ENCODE measurements at regions of chr16 and their contacts with region 1.

Region 1: DNA sequence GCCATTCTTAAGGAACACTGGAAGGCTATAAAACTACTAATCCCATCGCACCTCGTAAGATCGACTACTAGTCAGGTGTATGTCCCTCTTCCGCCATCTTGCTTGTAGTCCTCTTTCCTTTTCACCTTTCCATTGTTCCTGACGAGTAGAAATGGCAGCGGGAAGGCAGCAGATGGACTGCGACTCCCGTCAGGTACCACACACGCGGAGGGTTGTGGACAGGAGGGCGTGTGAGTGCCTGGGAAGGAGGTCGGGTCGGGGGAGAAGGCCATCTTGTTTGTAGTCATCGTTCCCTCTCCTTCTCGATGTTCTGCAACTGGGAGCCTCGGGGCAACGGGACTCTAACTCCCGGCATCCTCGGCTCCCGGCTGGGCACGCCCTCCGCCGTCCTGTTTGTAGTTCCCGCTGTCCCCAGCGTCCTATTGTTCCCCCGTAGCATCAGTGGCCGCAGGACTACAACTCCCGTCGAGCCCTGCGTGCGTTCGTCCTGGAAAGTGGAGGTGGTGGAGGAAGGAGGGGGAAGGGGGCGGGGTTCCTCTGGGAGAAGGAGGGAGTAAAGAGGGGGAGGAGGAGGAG is 324 bp upstream of the FBXL19 start:
- DNase-seq: peak; percentile 98
- H3K4me3 Mint-ChIP-seq: peak overlapping the region; percentile 99
- H3K27ac Mint-ChIP-seq: peak overlapping the region; percentile 100
- H3K4me1 Mint-ChIP-seq: peaks cover 10% of the 10 kb centered on the region
- H3K27me3 Mint-ChIP-seq: no peaks in the 10 kb centered on the region

Region 2: DNA sequence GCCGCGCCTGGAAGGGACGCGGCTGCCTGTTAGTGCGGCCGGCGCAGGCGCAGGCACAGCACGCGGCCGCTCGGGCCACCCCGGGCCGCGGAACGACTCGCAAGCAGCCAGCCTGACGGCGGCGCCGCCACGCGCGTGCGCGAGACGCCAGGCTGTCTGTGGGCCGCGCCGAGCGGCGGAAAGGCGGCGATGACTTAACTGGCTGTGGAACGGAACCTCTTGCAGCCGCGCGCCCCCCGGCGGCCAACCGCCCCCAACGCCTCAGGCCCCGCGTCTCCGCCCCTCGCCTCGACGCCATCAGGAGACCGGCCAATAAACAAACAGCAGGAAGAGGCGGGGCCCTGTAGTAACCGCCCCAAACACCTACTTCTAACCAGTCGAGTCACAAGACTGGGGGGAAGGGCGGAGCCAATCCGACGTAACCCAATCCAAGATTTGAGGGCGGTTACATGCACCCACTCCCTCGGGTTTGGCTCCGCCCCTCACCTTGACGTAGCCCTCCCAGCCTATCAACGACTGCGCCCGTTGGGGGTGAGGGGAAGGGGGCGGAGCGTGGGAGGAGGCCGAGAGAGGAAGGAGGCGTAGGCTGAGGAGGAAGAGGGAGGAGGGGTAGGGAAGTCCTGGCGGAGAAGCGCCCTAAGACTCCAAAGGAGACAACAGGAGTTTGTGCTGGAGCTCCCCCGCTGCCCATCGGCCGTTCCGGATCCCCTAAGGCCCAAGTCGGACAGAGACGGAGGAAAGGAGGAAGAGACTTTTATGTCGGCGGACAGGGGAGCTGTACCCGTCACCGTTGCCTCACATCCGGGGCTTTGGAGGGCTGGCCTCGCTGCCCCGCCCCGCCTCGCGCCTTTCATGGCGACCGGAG is 264.9 kb before region 1 on chr16 and contains the start of gene FBRS:
- CTCF ChIA-PET with region 1: no interaction called
- POLR2A ChIA-PET with region 1: no interaction called
- intact Hi-C with region 1: loop called (anchors 1 kb)
- DNase-seq: peak; percentile 100
- H3K4me3 Mint-ChIP-seq: peak within 1 kb of the TSS; percentile 96
- H3K27ac Mint-ChIP-seq: peak within 1 kb of the TSS; percentile 100
- H3K4me1 Mint-ChIP-seq: peaks cover 38% of the 10 kb centered on the region
- H3K27me3 Mint-ChIP-seq: no peaks in the 10 kb centered on the region
- total RNA-seq, gene FBRS: 91.8 to 95.6 TPM

Region 3: DNA sequence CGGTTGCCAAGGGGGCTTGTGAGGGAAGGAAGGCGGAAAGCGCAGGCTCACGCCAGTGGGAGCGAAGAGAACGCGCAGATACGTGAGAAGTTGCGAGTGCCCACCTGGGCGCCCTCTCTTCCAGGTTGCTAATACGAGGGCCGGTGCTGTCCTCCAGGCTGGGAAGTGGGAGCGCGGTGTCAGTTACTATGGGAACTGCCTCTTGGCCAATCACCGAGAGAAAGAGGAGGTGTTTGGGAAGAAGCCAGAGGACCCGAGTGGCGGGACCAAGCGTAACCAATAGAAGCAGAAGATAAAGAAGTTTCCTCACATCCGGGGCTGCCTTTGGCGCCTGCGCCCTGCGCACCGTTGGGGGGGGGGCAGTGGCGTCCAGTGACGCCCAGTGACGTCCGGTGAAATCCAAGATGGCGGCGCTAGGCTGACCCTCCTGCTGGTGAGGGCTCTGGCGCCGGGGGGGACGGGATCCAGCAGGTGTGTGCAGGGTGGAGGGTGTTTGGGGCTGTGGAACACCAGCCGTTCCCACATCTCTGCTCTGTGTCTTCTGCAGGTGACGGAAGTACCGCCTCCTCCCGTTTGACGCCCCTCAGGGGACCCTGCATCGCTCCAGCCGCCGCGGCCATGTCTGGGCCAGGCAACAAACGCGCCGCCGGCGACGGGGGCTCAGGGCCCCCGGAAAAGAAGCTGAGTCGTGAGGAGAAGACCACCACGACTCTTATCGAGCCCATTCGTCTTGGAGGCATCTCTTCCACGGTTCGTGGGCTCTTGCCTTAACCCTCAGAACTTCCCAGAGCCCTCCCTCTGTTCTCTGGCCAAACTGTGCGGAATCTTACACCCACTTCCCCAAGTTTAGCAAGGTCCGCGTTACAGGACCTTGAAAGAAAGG is 160.9 kb before region 1 on chr16 and contains the starts of genes CFAP119 and RNF40:
- CTCF ChIA-PET with region 1: no interaction called
- POLR2A ChIA-PET with region 1: no interaction called
- intact Hi-C with region 1: loop called (anchors 1 kb)
- DNase-seq: peak; percentile 96
- H3K4me3 Mint-ChIP-seq: peak within 1 kb of the TSS; percentile 93
- H3K27ac Mint-ChIP-seq: peak within 1 kb of the TSS; percentile 81
- H3K4me1 Mint-ChIP-seq: peaks cover 25% of the 10 kb centered on the region
- H3K27me3 Mint-ChIP-seq: no peaks in the 10 kb centered on the region
- total RNA-seq, gene CFAP119: 3.8 to 4.9 TPM
- total RNA-seq, gene RNF40: 70.9 to 72.8 TPM

Region 4: DNA sequence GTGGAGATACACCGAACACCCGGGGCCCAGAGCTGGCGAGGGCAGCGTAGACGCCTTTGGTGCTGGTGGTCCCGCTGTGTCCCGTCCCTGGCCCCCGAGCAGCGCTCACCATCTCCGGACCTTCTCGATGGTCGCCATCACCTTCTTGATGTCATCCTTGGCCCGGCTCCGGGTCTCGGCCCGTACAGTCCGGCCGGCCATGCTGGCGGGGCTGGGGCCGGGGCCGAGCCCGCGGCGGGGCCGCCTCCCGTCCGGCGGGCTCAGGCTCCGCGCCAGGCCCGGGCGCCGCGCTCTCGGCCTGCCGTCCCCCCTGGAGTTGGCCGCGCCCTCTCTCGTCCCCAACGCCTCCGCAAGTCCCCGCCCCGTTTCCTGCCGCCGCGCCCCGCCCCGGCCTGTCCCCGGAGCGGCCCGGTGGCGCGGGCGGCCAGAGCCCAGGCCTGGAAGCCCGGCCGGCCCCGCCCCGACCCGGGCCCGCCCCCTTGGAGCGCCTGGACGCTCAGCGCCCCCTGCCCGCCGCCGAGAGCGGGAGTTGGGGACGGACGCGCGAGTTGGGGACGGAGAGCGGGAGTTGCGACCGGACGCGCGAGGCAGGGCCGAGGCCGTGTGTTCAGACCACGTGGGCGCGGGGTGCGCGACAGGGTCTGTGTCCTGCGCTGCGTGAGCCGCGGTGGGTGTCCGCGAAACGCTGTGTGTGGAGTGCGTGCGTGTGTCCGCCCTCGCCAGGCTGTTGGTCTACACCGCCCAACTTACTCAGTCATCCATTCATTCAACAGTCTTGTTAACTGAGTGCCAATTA is 29.1 kb before region 1 on chr16 and contains the start of gene BCL7C:
- CTCF ChIA-PET with region 1: no interaction called
- POLR2A ChIA-PET with region 1: no interaction called
- intact Hi-C with region 1: loop called (anchors 1 kb)
- DNase-seq: peak; percentile 92
- H3K4me3 Mint-ChIP-seq: peak within 1 kb of the TSS; percentile 85
- H3K27ac Mint-ChIP-seq: peak within 1 kb of the TSS; percentile 74
- H3K4me1 Mint-ChIP-seq: peaks cover 38% of the 10 kb centered on the region
- H3K27me3 Mint-ChIP-seq: no peaks in the 10 kb centered on the region
- total RNA-seq, gene BCL7C: 25.6 to 25.7 TPM

Region 5: DNA sequence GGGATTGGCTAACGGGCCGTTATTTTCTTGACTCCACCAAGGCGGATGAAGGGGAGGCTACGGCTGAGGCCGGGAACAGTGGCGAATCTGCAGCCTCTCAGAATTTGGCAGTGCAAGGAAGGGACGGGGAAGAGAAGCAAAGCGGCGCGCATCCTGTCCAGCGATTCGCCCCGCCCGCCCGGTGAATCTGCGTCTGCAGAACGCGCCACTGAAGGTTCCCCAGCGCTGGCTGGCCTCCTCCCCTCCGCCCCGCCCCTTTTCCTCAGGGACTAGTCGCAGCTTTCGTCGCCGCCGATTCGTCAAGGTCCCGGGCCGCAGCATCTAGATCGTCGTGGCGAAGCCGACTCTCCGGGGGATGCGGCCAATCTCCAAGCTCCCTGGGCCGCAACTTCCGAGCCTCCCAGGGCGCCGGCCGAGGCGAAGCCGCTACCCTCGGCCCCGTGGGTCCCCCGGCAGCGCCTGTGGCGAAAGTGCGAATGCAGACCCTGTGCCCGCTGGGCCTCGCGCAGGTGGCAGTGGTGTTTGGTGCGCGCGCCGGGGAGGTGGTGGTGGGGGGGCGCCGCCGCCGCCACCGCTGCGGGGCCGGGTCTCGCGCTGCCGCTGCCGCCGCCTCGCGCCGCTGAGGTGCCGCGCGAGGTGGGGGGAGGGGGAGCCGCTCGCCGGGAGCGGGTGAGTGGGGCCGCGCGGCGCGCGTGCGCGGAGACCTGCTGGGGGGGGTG is 34.6 kb after region 1 on chr16 and contains the start of gene SETD1A:
- CTCF ChIA-PET with region 1: no interaction called
- POLR2A ChIA-PET with region 1: no interaction called
- intact Hi-C with region 1: loop called (anchors 1 kb)
- DNase-seq: peak; percentile 97
- H3K4me3 Mint-ChIP-seq: peak within 1 kb of the TSS; percentile 92
- H3K27ac Mint-ChIP-seq: peak within 1 kb of the TSS; percentile 99
- H3K4me1 Mint-ChIP-seq: peaks cover 26% of the 10 kb centered on the region
- H3K27me3 Mint-ChIP-seq: no peaks in the 10 kb centered on the region
- total RNA-seq, gene SETD1A: 16.4 to 17.4 TPM

Region 6: GRCh38 chr16:31528523-31529397 is 605.7 kb after region 1 on chr16:
- CTCF ChIA-PET with region 1: no interaction called
- POLR2A ChIA-PET with region 1: no interaction called
- intact Hi-C with region 1: no loop called
- DNase-seq: no peak
- H3K4me3 Mint-ChIP-seq: no peak overlapping the region
- H3K27ac Mint-ChIP-seq: no peak overlapping the region
- H3K4me1 Mint-ChIP-seq: peaks cover 12% of the 10 kb centered on the region
- H3K27me3 Mint-ChIP-seq: peaks cover 14% of the 10 kb centered on the region

Region 7: GRCh38 chr16:31868691-31869167 is 945.7 kb after region 1 on chr16:
- CTCF ChIA-PET with region 1: no interaction called
- POLR2A ChIA-PET with region 1: no interaction called
- intact Hi-C with region 1: loop called (anchors 2 kb)
- DNase-seq: peak; percentile 87
- H3K4me3 Mint-ChIP-seq: peak overlapping the region; percentile 59
- H3K27ac Mint-ChIP-seq: peak overlapping the region; percentile 96
- H3K4me1 Mint-ChIP-seq: peaks cover 51% of the 10 kb centered on the region
- H3K27me3 Mint-ChIP-seq: no peaks in the 10 kb centered on the region

Measured in activated CD4-positive, alpha-beta memory T cell treated with anti-CD3 and anti-CD28 coated beads for 36 hours (primary cell).